ENCODE measurements at regions of chr2 and their contacts with region 1.

Region 1: GRCh38 chr2:233711312-233712008 is 1.2 kb upstream of the UGT1A5 start:
- DNase-seq: peak; percentile 1
- ATAC-seq: peak; percentile 96
- H3K4me3 ChIP-seq: no peak overlapping the region
- H3K27ac ChIP-seq: no peak overlapping the region
- H3K4me1 ChIP-seq: no peaks in the 10 kb centered on the region
- H3K27me3 ChIP-seq: peaks cover 0 to 4% of the 10 kb centered on the region in 2 experiments; a peak in 1 of 4 replicates
- CTCF ChIP-seq: peak; percentile 82 to 87 (median 85)
- EP300 ChIP-seq: no peak
- POLR2A ChIP-seq: no peak
- RAD21 ChIP-seq: peak; percentile 83

Region 2: GRCh38 chr2:233480490-233481202 is 230.8 kb before region 1 on chr2:
- CTCF ChIA-PET with region 1: interaction called, 3 read pairs
- POLR2A ChIA-PET with region 1: no interaction called
- RAD21 ChIA-PET with region 1: no interaction called
- SMC1A ChIA-PET with region 1: no interaction called
- in situ Hi-C with region 1: no loop called
- intact Hi-C with region 1: loop called (anchors 10 kb)
- DNase-seq: no peak
- ATAC-seq: no peak; the same call in 2 of the 3 replicates
- H3K4me3 ChIP-seq: no peak overlapping the region
- H3K27ac ChIP-seq: no peak overlapping the region
- H3K4me1 ChIP-seq: no peaks in the 10 kb centered on the region
- H3K27me3 ChIP-seq: no peaks in the 10 kb centered on the region
- CTCF ChIP-seq: peak in 1 of 3 experiments; percentile 9; a peak in 1 of 6 replicates
- EP300 ChIP-seq: no peak
- POLR2A ChIP-seq: no peak
- RAD21 ChIP-seq: no peak